ENCODE measurements at regions of chr1 and their contacts with region 1.

Region 1: GRCh38 chr1:203440771-203441170 is 34.8 kb upstream of the PRELP start:
- DNase-seq: peak; percentile 37
- H3K4me3 ChIP-seq: no peak overlapping the region
- CTCF ChIP-seq: peak; percentile 73

Region 2: DNA sequence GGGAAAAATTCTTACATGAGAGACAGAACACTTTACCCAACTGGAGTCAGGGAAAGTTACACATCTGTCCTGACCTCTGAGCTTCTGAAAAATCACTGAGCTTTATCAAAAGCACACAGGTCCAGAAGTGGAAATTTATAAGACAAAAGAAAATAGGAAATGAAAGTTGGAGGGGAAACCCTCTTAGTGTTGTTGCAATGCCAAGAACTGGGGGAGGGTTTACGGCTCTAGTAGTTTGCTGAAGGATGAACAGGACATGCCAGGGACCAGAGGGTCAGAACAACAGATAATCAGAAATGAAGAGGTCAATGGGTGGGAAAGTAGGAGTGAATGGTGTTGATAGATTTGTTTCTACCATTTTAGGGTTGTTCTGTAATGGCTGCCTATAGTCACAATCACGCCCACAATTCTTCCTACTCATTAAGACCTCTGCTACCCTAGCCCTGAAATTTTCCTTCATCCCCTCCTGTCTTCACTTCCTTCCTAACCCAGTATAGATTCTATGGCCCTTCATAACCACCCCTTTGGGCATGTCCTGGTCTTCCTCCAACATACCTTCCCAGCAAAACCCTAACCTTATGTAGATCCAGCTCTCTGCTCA is 59.5 kb before region 1 on chr1:
- CTCF ChIA-PET with region 1: interaction called, 13 read pairs
- POLR2A ChIA-PET with region 1: no interaction called
- DNase-seq: no peak
- H3K4me3 ChIP-seq: no peak overlapping the region
- CTCF ChIP-seq: no peak

Region 3: DNA sequence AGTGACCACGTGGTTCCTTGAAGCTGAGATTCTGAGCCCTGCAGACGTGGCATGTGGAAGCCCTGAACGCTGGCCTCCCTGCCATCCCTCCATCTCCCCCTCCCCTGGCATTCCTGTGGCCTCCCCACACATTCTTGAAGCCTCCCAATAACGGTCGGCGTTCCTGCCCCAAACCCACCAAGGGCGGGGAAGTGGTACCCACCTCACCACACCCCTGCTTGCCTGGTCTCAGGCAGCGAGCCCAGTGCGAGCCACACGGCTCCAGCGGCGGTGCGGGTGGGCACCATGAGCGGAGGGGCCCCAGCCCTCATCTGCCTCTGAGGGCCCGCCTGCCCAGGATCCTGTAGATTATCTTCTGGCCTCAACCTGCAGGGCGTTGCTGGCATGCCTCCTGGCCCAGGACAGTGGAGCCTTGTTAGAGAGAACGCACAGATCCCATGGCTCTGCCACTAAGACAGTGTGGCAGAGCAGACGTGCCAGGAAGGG is 14.3 kb after region 1 on chr1:
- CTCF ChIA-PET with region 1: interaction called, 12 read pairs
- POLR2A ChIA-PET with region 1: no interaction called
- DNase-seq: no peak
- H3K4me3 ChIP-seq: no peak overlapping the region
- CTCF ChIP-seq: no peak